Activated T-helper 2 cell treated with anti-CD3 and anti-CD28 coated beads, Interferon-gamma antibody, Interleukin-2, Interleukin-4, amounts not matched to agents 10 μg/mL and 5 μg/mL and 100 μg/mL, durations not matched to agents 14 hours and 24 hours and 36 hours (primary cell): ENCODE measurements at regions of chr6 and their contacts with region 1.

Region 1: GRCh38 chr6:134436281-134436815 is 118.4 kb upstream of the SGK1 start:
- DNase-seq: peak; percentile 64
- H3K4me3 Mint-ChIP-seq: peak overlapping the region; percentile 54
- H3K27ac Mint-ChIP-seq: peak overlapping the region; percentile 96
- H3K4me1 Mint-ChIP-seq: peaks cover 37% of the 10 kb centered on the region
- H3K27me3 Mint-ChIP-seq: no peaks in the 10 kb centered on the region

Region 2: DNA sequence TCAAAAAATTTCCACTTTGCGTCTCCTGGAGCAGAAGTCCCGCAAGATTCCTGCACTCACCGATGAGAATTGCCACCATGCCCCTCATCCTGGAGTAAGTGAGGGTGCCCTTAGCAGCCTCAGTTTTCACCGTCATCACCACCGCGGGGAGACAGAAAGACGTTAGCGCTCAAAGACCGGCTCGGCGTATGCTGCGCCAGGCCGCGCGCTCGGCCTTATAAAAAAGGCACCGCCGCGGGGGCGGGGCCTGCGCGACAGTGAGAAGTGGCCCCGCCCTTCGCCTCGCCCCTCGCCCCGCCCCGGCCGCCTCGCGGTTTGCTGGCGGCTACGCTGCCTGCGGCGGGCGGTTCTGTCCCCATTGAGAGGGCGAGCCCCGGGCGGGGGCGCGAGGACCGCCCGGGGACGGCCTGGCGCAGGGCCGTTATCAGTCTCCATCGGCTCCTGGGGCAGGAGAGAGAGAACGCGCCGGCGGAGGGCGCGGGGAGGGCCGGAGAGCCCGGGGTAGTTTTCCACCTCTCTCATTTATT is 261.6 kb before region 1 on chr6:
- intact Hi-C with region 1: loop called (anchors 1 kb)
- DNase-seq: peak; percentile 87
- H3K4me3 Mint-ChIP-seq: peak overlapping the region; percentile 98
- H3K27ac Mint-ChIP-seq: peak overlapping the region; percentile 97
- H3K4me1 Mint-ChIP-seq: peaks cover 48% of the 10 kb centered on the region
- H3K27me3 Mint-ChIP-seq: peaks cover 4% of the 10 kb centered on the region

Region 3: GRCh38 chr6:134230087-134230700 is 206.2 kb before region 1 on chr6:
- intact Hi-C with region 1: no loop called
- DNase-seq: no peak
- H3K4me3 Mint-ChIP-seq: no peak overlapping the region
- H3K27ac Mint-ChIP-seq: no peak overlapping the region
- H3K4me1 Mint-ChIP-seq: peaks cover 12% of the 10 kb centered on the region
- H3K27me3 Mint-ChIP-seq: no peaks in the 10 kb centered on the region

Region 4: GRCh38 chr6:134352786-134353480 is 83.4 kb before region 1 on chr6:
- intact Hi-C with region 1: loop called (anchors 1 kb)
- DNase-seq: no peak
- H3K4me3 Mint-ChIP-seq: no peak overlapping the region
- H3K27ac Mint-ChIP-seq: peak overlapping the region; percentile 75
- H3K4me1 Mint-ChIP-seq: peaks cover 26% of the 10 kb centered on the region
- H3K27me3 Mint-ChIP-seq: no peaks in the 10 kb centered on the region

Region 5: DNA sequence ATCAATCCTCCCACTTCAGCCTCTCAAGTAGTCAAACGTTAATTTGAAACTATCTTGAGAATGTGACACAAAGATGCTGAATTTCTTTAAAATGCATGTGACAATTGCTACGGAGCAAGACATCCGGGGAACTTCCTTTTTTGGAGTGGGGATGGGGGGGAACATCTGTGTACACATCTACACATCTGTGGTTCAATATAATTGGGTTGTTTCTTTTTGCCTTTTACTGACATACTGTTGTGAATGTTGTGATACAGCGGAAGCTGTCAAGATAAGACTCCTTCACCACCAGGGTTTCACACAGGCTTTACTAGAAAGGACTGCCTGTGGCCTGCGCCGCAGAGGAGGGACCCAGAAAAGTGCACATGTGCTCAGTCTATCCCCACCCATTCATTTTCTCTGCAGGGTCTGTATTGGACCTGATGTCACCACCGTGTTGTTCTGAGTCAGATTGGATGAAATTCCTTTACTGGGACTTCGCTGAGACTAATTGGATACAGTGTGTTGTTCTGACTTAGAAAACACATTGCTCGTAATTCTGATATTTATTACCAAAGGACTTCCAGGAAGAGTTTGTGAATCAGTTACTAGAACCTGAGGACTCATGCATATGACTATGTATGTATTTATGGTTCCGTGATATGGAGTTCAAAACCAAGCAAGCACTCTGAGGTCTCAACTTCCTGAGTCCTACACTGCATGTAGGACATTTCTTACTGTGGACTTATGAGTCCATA is 19.8 kb before region 1 on chr6:
- intact Hi-C with region 1: loop called (anchors 2 kb)
- DNase-seq: no peak
- H3K4me3 Mint-ChIP-seq: no peak overlapping the region
- H3K27ac Mint-ChIP-seq: peak overlapping the region; percentile 70
- H3K4me1 Mint-ChIP-seq: peaks cover 18% of the 10 kb centered on the region
- H3K27me3 Mint-ChIP-seq: no peaks in the 10 kb centered on the region

Region 6: DNA sequence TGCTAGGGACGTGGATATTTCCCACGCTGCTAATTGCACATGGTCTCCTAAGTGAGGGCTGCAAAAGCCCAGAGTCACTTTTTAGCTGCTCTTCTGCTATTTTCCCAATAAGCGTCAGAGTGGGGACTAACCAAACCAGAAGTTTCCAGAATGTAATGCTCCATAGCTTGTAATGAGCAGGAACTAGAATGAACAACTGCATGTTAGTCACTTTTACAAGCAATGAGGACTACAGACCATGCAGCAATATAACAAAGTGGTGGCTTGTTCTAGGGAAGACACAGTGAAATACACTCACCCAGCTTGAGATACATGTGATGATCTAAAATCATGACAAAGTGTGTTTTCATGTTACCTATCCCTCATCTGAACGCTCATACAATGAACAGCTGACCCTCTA is 195.7 kb after region 1 on chr6:
- intact Hi-C with region 1: loop called (anchors 2 kb)
- DNase-seq: no peak
- H3K4me3 Mint-ChIP-seq: no peak overlapping the region
- H3K27ac Mint-ChIP-seq: no peak overlapping the region
- H3K4me1 Mint-ChIP-seq: peaks cover 33% of the 10 kb centered on the region
- H3K27me3 Mint-ChIP-seq: peaks cover 10% of the 10 kb centered on the region

Region 7: GRCh38 chr6:135438907-135439535 is 1002.7 kb after region 1 on chr6:
- intact Hi-C with region 1: loop called (anchors 5 kb)
- DNase-seq: no peak
- H3K4me3 Mint-ChIP-seq: peak overlapping the region; percentile 37
- H3K27ac Mint-ChIP-seq: peak overlapping the region; percentile 75
- H3K4me1 Mint-ChIP-seq: peaks cover 35% of the 10 kb centered on the region
- H3K27me3 Mint-ChIP-seq: no peaks in the 10 kb centered on the region